ENCODE measurements at regions of chr11 and their contacts with region 1.

Region 1: GRCh38 chr11:19268951-19269350 is 28.2 kb upstream of the E2F8 start:
- DNase-seq: no peak
- H3K4me3 ChIP-seq: no peak overlapping the region
- H3K27ac ChIP-seq: no peak overlapping the region
- H3K27me3 ChIP-seq: peaks cover 0 to 18% (median 3%) of the 10 kb centered on the region in 45 donors
- CTCF ChIP-seq: no peak

Region 2: GRCh38 chr11:19306179-19306944 is 37.4 kb after region 1 on chr11:
- intact Hi-C with region 1: loop called in 1 of 2 experiments (anchors 5 kb)
- DNase-seq: no peak
- H3K4me3 ChIP-seq: no peak overlapping the region
- H3K27ac ChIP-seq: no peak overlapping the region
- H3K27me3 ChIP-seq: peaks cover 0 to 14% (median 0%) of the 10 kb centered on the region in 45 donors
- CTCF ChIP-seq: no peak